ENCODE measurements at regions of chr5 and their contacts with region 1.

Region 1: DNA sequence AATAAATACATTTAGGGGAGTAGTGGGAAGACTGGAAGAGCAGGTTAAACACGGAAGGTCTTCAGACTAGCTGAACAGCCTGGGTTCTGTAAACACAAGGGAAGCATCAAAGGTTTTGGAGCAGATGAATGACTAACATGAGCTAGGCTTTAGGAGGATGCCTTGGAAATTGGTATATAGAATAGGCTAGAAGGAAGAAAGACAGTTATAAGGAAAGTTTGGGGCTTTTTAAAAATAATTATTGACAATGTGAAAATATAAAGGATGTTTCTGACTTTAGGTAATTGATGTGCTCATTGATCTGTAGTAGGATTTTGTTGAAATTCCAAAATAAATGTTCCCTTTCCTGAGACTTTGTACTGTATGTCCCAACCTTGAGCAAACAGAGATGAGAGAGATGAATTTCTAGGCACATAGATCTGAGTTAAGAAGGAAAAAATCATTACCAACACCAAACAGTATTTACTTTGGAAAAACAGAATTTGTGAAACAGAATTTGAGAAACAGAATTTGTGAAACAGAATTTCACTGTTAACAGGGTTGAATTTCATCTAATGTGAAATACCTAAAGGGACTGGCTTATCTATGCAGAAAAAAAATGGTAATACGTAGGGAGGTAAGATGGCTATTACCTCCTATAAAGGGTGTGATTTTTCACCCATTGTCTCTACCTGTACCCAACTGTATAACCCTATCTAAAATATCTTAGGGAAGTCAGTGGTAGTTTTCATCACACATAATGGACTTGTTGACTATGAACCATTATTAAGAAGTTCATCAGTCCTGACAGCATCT is 28.8 kb downstream of the SKP2 start:
- DNase-seq: no peak
- H3K4me3 ChIP-seq: no peak overlapping the region
- H3K27ac ChIP-seq: no peak overlapping the region
- H3K4me1 ChIP-seq: peaks cover 0 to 3% (median 0%) of the 10 kb centered on the region in 4 donors
- H3K27me3 ChIP-seq: no peaks in the 10 kb centered on the region
- CTCF ChIP-seq: no peak
- EP300 ChIP-seq: no peak
- POLR2A ChIP-seq: no peak

Region 2: GRCh38 chr5:36060420-36060887 is 120.3 kb before region 1 on chr5:
- in situ Hi-C with region 1: no loop called
- intact Hi-C with region 1: no loop called
- DNase-seq: no peak
- H3K4me3 ChIP-seq: no peak overlapping the region
- H3K27ac ChIP-seq: no peak overlapping the region
- H3K4me1 ChIP-seq: no peaks in the 10 kb centered on the region
- H3K27me3 ChIP-seq: no peaks in the 10 kb centered on the region
- CTCF ChIP-seq: no peak
- EP300 ChIP-seq: no peak
- POLR2A ChIP-seq: no peak

Region 3: GRCh38 chr5:36205329-36205728 is 24.6 kb after region 1 on chr5:
- in situ Hi-C with region 1: no loop called
- intact Hi-C with region 1: loop called (anchors 1 kb)
- DNase-seq: no peak
- H3K4me3 ChIP-seq: no peak overlapping the region
- H3K27ac ChIP-seq: no peak overlapping the region
- H3K4me1 ChIP-seq: no peaks in the 10 kb centered on the region
- H3K27me3 ChIP-seq: no peaks in the 10 kb centered on the region
- CTCF ChIP-seq: no peak
- EP300 ChIP-seq: no peak
- POLR2A ChIP-seq: no peak